Right ventricle myocardium inferior (tissue), 1 donor: ENCODE measurements at regions of chr10 and their contacts with region 1.

Region 1: GRCh38 chr10:110535958-110536891 is 31.3 kb upstream of the SMC3 start:
- DNase-seq: no peak
- ATAC-seq: peak; percentile 70

Region 2: DNA sequence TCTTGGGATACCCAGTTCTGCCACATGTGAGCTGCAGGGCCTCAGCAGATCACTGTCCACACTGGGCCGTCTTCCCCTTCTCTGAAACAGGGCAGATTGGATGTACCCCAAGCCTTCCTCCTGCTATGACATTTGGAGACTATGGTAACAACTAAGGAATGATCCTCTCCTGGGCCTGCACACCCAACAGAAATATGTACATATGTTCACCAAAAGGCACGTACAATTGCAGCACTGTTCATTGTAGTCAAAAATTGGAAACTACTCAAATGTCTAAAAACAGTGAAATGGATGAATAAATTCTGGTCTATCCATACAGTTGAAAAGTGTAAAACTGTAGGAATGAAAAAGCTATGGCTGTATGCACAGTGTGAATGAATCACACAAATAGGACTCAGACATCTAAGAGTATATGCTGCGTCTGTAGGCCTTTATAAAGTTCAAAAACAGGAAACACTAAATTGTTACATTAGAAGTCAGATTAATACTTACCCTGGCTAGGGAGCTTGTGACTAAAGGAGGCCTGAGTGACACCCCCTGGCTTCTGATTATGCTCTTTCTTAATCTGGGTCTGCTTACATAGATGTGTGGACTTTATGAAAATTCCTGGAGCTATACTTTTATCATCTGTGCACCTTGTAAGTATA is 596.8 kb before region 1 on chr10:
- intact Hi-C with region 1: no loop called
- DNase-seq: no peak
- ATAC-seq: no peak

Region 3: GRCh38 chr10:110311357-110311949 is 224.8 kb before region 1 on chr10:
- intact Hi-C with region 1: loop called (anchors 1 kb)
- DNase-seq: no peak
- ATAC-seq: peak; percentile 50

Region 4: GRCh38 chr10:110354322-110354766 is 181.9 kb before region 1 on chr10:
- intact Hi-C with region 1: loop called (anchors 5 kb)
- DNase-seq: no peak
- ATAC-seq: peak; percentile 82